B cell (primary cell): ENCODE measurements at regions of chr1 and their contacts with region 1.

Region 1: DNA sequence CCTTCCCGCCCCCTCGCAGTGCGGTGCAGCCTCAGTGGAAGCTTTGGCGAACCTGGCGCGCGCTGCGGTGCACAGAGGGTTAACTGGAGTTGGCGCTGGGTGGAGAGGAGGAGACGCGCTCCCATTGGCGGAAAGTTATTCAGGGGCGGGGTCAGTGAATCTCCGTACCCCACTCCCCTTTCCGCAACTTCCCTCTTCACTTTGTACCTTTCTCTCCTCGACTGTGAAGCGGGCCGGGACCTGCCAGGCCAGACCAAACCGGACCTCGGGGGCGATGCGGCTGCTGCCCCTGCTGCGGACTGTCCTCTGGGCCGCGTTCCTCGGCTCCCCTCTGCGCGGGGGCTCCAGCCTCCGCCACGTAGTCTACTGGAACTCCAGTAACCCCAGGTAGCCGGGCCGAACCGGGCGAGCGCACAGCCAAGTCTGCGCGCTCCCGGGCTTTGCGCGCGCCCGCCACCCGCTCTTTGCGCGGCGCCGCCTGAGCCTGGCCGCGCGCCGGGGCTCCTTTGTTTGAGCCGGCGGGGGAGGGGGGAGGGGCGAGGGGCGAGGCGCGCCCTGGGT is at the start of gene EFNA4:
- DNase-seq: peak; percentile 94
- ATAC-seq: peak; percentile 84
- H3K4me3 ChIP-seq: peak within 1 kb of the TSS; percentile 68 to 78 (median 74)
- H3K4me3 Mint-ChIP-seq: peak within 1 kb of the TSS; percentile 94
- H3K27ac ChIP-seq: peak within 1 kb of the TSS; percentile 25 to 55
- H3K27ac Mint-ChIP-seq: peak within 1 kb of the TSS; percentile 87
- H3K4me1 ChIP-seq: peaks cover 27 to 50% of the 10 kb centered on the region in 2 donors
- H3K4me1 Mint-ChIP-seq: peaks cover 47% of the 10 kb centered on the region
- H3K27me3 ChIP-seq: peaks cover 0 to 3% (median 0%) of the 10 kb centered on the region in 4 experiments
- H3K27me3 Mint-ChIP-seq: no peaks in the 10 kb centered on the region
- CTCF ChIP-seq: no peak
- total RNA-seq, gene EFNA4: 8.4 and 9.9 TPM in 2 replicates

Region 2: GRCh38 chr1:154669464-154670282 is 394.0 kb before region 1 on chr1:
- CTCF ChIA-PET with region 1: interaction called, 18 read pairs
- POLR2A ChIA-PET with region 1: no interaction called
- intact Hi-C with region 1: loop called (anchors 1 kb)
- DNase-seq: peak; percentile 79
- ATAC-seq: peak; percentile 96
- H3K4me3 ChIP-seq: no peak overlapping the region
- H3K4me3 Mint-ChIP-seq: no peak overlapping the region
- H3K27ac ChIP-seq: no peak overlapping the region
- H3K27ac Mint-ChIP-seq: no peak overlapping the region
- H3K4me1 ChIP-seq: peaks cover 0 to 3% of the 10 kb centered on the region in 2 donors
- H3K4me1 Mint-ChIP-seq: no peaks in the 10 kb centered on the region
- H3K27me3 ChIP-seq: no peaks in the 10 kb centered on the region
- H3K27me3 Mint-ChIP-seq: peaks cover 7% of the 10 kb centered on the region
- CTCF ChIP-seq: peak; percentile 66

Region 3: DNA sequence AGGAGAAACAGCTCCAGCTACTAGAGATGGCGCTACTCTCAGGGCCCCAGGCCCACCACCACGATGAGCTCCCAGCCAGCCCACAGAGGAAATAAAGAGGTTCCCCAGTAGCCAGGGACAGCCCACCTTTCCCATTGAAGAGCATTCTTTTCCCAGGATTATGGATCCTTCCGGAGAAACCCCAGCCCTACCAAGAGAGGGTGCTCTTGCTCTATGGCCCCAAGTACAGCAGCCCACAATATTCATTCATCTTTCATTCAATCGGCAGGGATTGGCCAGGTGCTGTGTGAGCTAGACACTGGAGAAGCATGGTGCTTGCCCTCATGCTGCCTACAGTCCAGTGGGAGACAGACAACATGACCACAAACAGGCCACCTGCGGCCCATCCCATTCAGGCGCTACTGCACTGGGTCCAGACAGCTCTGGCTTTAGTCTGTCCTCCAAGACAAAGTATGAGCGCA is 157.0 kb before region 1 on chr1:
- CTCF ChIA-PET with region 1: interaction called, 11 read pairs
- POLR2A ChIA-PET with region 1: no interaction called
- intact Hi-C with region 1: no loop called
- DNase-seq: no peak
- ATAC-seq: no peak
- H3K4me3 ChIP-seq: no peak overlapping the region
- H3K4me3 Mint-ChIP-seq: no peak overlapping the region
- H3K27ac ChIP-seq: no peak overlapping the region
- H3K27ac Mint-ChIP-seq: no peak overlapping the region
- H3K4me1 ChIP-seq: no peaks in the 10 kb centered on the region
- H3K4me1 Mint-ChIP-seq: no peaks in the 10 kb centered on the region
- H3K27me3 ChIP-seq: no peaks in the 10 kb centered on the region
- H3K27me3 Mint-ChIP-seq: no peaks in the 10 kb centered on the region
- CTCF ChIP-seq: no peak

Region 4: DNA sequence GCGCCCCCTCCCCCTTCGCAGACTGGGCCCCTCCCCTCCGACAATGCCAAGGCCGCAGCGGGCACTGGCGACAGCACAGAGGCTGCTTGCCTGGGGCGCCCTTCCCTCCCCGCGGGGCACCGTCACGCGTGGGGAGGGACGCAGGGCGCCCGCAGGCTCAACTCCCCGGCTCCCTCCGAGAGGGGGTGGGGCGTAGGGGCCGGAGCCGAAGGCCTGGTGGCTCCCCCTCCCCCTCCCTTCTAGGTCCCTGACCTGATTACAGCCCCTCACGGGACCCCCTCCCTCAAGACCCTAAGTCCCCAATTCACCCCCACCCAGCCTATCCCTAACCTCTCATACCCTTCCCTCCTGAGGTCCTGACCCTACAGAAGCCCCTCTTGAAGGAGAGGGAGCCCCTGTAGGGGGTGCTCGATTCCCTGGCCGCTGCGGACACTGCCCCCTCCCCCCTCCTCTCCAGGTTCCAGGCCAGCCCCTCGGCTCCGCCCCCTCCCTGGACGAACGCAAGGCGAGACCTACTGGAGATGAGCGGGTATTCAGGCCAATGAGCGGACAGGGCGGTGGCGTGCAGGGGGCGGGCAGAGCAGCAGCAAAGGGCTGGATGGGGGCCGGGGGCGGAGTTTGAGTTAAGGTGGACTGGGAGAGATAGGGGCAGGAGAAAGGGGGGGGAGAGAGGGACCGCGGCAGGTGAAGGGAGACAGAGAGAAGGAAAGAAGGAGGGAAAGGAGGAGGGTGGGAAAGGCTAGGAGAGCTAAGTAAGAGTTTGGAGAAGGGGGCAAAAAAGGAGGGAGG is 61.8 kb before region 1 on chr1:
- CTCF ChIA-PET with region 1: interaction called, 5 read pairs
- POLR2A ChIA-PET with region 1: no interaction called
- intact Hi-C with region 1: loop called (anchors 2 kb)
- DNase-seq: peak; percentile 98
- ATAC-seq: peak; percentile 81
- H3K4me3 ChIP-seq: peak overlapping the region; percentile 74 to 95 (median 86)
- H3K4me3 Mint-ChIP-seq: peak overlapping the region; percentile 90
- H3K27ac ChIP-seq: peak overlapping the region; percentile 73 to 80
- H3K27ac Mint-ChIP-seq: peak overlapping the region; percentile 96
- H3K4me1 ChIP-seq: peaks cover 41 to 50% of the 10 kb centered on the region in 2 donors
- H3K4me1 Mint-ChIP-seq: peaks cover 51% of the 10 kb centered on the region
- H3K27me3 ChIP-seq: no peaks in the 10 kb centered on the region
- H3K27me3 Mint-ChIP-seq: no peaks in the 10 kb centered on the region
- CTCF ChIP-seq: no peak

Region 5: DNA sequence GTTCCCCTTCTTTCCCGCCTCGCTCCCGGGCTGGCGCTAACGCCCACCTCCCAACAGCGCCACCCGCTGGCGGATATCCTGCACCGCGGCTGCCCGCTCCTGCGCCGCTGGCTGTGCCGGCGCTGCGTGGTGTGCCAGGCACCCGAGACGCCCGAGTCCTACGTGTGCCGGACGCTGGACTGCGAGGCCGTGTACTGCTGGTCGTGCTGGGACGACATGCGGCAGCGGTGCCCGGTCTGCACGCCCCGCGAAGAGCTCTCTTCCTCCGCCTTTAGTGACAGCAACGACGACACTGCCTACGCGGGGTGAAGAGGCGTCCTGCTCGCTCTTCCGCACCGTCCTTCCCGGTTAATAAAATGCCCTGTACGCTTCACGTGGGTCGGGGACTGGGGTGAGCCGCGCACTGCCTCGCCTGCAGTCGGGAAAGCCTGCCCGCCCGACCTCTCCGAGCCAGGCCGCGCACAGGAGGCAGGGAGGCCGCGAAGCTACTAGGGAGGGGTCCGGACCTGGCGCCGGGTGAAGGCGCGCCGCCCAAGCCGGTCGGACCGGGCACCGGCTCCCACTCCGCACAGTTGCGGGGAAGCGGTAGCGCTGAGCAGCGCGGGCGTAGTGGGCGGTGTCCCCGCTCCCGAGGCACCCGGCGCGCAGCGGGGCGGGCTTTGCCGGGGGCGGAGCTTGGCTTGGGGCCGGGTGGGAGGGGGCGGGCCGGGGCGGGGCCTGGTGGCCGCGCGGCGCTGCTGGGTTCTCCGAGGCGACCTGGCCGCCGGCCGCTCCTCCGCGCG is 12.9 kb before region 1 on chr1 and contains the start of gene ADAM15:
- CTCF ChIA-PET with region 1: interaction called, 370 read pairs
- POLR2A ChIA-PET with region 1: interaction called, 8 read pairs
- intact Hi-C with region 1: loop called (anchors 1 kb)
- DNase-seq: peak; percentile 83
- ATAC-seq: peak; percentile 84
- H3K4me3 ChIP-seq: peak within 1 kb of the TSS; percentile 44 to 82 (median 76)
- H3K4me3 Mint-ChIP-seq: peak within 1 kb of the TSS; percentile 92
- H3K27ac ChIP-seq: peak within 1 kb of the TSS in 1 of 2 donors; percentile 18
- H3K27ac Mint-ChIP-seq: peak within 1 kb of the TSS; percentile 77
- H3K4me1 ChIP-seq: peaks cover 20 to 30% of the 10 kb centered on the region in 2 donors
- H3K4me1 Mint-ChIP-seq: peaks cover 25% of the 10 kb centered on the region
- H3K27me3 ChIP-seq: no peaks in the 10 kb centered on the region
- H3K27me3 Mint-ChIP-seq: no peaks in the 10 kb centered on the region
- CTCF ChIP-seq: peak; percentile 95
- total RNA-seq, gene ADAM15: 14.6 and 17.0 TPM in 2 replicates

Region 6: DNA sequence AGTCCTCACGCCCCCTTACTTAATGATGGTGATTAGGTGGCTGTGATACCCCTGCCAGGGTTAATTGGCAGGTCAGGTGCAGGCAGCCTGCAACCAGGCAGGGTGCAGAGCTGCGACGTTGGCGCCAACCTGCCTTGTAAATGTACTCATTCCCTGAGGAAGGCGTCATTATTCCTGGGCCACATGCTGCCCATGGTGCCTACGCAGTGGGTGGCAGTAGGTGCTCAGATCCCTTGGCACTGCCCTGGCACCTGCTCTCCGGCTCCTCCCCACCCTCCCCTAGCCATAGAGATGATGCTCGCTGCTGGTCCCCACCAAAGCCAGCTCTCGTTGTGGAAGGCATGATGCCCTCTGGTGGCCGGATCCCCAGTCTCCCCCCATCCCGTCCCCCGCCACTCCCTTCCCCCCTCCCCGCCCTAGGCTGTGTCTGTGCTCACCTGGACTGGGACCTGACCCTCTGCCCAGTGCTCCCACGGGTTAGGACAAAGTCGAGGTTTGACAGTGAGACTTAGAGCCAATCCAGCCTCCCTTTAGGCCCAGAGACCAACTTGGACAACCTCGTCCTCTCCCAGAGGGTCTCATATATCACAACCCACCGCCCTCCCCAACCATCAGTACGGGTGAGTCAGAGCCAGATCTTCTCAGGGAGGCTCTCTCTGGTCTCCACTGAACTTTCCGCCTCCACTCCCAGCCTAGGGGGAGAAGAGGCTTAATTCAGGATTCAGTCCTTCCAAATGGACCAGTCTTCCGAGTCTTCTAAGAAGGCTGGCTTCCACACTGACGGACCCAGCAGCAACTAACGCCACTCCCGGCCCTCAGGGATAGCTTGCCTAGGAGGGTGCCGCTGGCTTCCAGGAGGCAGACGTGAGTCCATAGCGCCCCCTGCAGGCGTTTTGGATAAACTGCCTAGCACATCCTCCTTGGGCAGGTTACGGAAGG is 103.8 kb after region 1 on chr1:
- CTCF ChIA-PET with region 1: interaction called, 12 read pairs
- POLR2A ChIA-PET with region 1: interaction called, 3 read pairs
- intact Hi-C with region 1: loop called (anchors 1 kb)
- DNase-seq: peak; percentile 91
- ATAC-seq: peak; percentile 81
- H3K4me3 ChIP-seq: peak overlapping the region; percentile 5 to 48 (median 38)
- H3K4me3 Mint-ChIP-seq: peak overlapping the region; percentile 82
- H3K27ac ChIP-seq: peak overlapping the region; percentile 2 to 34
- H3K27ac Mint-ChIP-seq: peak overlapping the region; percentile 83
- H3K4me1 ChIP-seq: peaks cover 17 to 28% of the 10 kb centered on the region in 2 donors
- H3K4me1 Mint-ChIP-seq: peaks cover 27% of the 10 kb centered on the region
- H3K27me3 ChIP-seq: no peaks in the 10 kb centered on the region
- H3K27me3 Mint-ChIP-seq: no peaks in the 10 kb centered on the region
- CTCF ChIP-seq: peak; percentile 90